OCI-LY7 (cell line): ENCODE measurements at regions of chr20 and their contacts with region 1.

Region 1: GRCh38 chr20:35463455-35464300 is 8.3 kb downstream of the CEP250 start:
- DNase-seq: peak; percentile 80
- H3K4me3 ChIP-seq: no peak overlapping the region
- H3K27ac ChIP-seq: no peak overlapping the region
- H3K4me1 ChIP-seq: peaks cover 22% of the 10 kb centered on the region
- CTCF ChIP-seq: peak; percentile 98

Region 2: GRCh38 chr20:35329435-35330139 is 134.1 kb before region 1 on chr20:
- CTCF ChIA-PET with region 1: no interaction called
- POLR2A ChIA-PET with region 1: no interaction called
- intact Hi-C with region 1: no loop called
- DNase-seq: peak; percentile 61
- H3K4me3 ChIP-seq: no peak overlapping the region
- H3K27ac ChIP-seq: no peak overlapping the region
- H3K4me1 ChIP-seq: no peaks in the 10 kb centered on the region
- CTCF ChIP-seq: peak; percentile 90

Region 3: GRCh38 chr20:35502352-35502751 is 38.7 kb after region 1 on chr20:
- CTCF ChIA-PET with region 1: interaction called, 3 read pairs
- POLR2A ChIA-PET with region 1: interaction called, 4 read pairs
- intact Hi-C with region 1: loop called (anchors 1 kb)
- DNase-seq: peak; percentile 93
- H3K4me3 ChIP-seq: no peak overlapping the region
- H3K27ac ChIP-seq: peak overlapping the region; percentile 64
- H3K4me1 ChIP-seq: peaks cover 31% of the 10 kb centered on the region
- CTCF ChIP-seq: no peak

Region 4: GRCh38 chr20:35525639-35526038 is 62.0 kb after region 1 on chr20:
- CTCF ChIA-PET with region 1: no interaction called
- POLR2A ChIA-PET with region 1: interaction called, 3 read pairs
- intact Hi-C with region 1: loop called (anchors 2 kb)
- DNase-seq: no peak
- H3K4me3 ChIP-seq: no peak overlapping the region
- H3K27ac ChIP-seq: no peak overlapping the region
- H3K4me1 ChIP-seq: no peaks in the 10 kb centered on the region
- CTCF ChIP-seq: no peak

Region 5: DNA sequence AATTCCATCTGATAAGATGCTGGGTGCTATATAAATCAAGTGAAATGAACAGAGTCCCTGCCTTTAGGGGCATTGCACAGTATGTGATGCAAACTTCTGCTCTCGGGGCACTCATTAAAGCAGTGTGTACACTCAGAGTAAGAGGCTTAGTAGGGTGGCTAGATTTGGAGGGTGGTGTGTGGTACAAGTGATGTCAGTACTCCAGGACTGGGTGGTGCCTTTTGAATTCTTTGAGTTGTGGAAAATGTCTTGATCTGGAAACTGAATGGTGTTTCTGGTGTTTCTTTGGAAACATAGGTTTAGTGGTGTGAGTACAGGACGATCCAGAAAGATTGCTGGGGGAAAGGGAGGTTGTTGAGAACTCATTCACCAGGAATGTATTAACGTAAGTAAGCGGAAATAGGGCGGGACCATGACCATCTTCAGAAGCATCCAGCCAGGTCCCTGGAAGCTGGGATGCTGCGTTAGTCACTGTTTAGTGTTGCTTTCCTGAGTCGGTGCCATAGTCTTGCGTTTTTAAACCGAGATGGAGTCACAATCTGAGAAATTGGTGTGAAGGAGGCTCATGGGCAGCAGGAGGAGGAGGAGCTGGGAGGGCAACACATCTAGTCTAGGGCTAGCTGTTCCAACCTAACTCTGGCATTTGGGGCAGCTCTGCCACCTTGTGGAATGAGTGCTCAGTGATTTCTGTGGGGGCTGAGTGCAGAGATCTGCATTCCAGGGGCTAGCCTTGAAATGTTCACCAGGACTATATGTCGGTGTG is 420.3 kb after region 1 on chr20:
- CTCF ChIA-PET with region 1: no interaction called
- POLR2A ChIA-PET with region 1: no interaction called
- intact Hi-C with region 1: loop called (anchors 2 kb)
- DNase-seq: peak; percentile 72
- H3K4me3 ChIP-seq: no peak overlapping the region
- H3K27ac ChIP-seq: no peak overlapping the region
- H3K4me1 ChIP-seq: no peaks in the 10 kb centered on the region
- CTCF ChIP-seq: peak; percentile 86